ENCODE measurements at regions of chr11 and their contacts with region 1.

Region 1: DNA sequence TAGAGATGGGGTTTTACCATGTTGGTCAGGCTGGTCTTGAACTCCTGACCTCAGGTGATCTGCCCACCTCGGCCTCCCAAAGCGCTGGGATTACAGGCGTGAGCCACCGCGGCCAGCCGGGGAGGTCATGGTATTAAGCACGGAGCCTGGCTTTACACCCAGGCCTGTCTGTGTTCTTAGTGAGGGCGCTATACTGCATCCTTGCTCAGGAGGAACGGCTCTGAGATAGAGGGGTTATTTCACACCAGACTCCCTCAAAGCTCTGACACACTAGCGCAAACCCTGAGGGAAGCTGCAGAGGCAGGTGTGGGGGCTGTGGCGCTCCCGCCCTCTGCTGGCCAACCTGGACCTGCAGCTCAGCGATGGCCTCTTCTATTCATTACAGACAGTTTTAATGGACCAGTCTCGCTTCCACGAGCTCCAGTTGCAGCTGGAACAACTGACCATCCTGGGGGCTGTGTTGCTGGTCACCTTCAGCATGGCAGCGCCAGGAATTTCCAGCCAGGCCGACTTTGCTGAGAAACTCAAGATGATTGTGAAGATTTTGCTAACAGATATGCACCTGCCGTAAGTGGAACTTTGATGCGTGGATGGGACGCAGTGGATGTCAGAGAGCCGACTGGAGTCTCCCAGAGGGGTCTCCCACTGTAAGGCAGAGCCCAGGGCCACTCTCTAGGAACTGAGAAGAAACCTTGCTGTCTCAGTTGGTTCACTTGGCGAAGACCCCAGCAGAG is 26.2 kb downstream of the TCP11L1 start:
- DNase-seq: peak; percentile 82
- H3K4me3 Mint-ChIP-seq: no peak overlapping the region
- H3K27ac Mint-ChIP-seq: no peak overlapping the region
- H3K4me1 Mint-ChIP-seq: peaks cover 31% of the 10 kb centered on the region
- H3K27me3 Mint-ChIP-seq: no peaks in the 10 kb centered on the region

Region 2: DNA sequence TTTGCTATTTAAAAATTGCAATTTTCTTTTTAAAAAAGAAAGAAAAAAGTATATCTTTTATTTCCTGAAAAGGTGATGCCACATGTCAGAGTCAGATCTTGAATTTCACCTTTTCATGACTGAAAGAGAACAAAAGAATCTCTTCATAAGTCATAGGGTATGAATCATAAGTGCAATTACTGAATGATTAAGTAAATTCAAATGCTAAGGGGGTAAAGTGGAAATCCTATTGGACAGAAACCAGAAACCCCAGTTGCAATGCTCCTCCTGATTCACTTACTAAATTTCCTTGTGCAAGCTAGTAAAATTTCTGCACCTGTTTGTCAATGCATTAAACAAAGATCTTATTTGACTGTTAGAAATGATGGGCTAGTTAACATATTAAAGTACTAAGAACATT is 244.1 kb before region 1 on chr11:
- CTCF ChIA-PET with region 1: interaction called, 4 read pairs
- POLR2A ChIA-PET with region 1: no interaction called
- intact Hi-C with region 1: loop called (anchors 5 kb)
- DNase-seq: no peak
- H3K4me3 Mint-ChIP-seq: no peak overlapping the region
- H3K27ac Mint-ChIP-seq: no peak overlapping the region
- H3K4me1 Mint-ChIP-seq: peaks cover 20% of the 10 kb centered on the region
- H3K27me3 Mint-ChIP-seq: peaks cover 7% of the 10 kb centered on the region

Region 3: GRCh38 chr11:32960553-32961164 is 105.0 kb before region 1 on chr11:
- CTCF ChIA-PET with region 1: interaction called, 263 read pairs
- POLR2A ChIA-PET with region 1: interaction called, 3 read pairs
- intact Hi-C with region 1: loop called (anchors 1 kb)
- DNase-seq: no peak
- H3K4me3 Mint-ChIP-seq: no peak overlapping the region
- H3K27ac Mint-ChIP-seq: no peak overlapping the region
- H3K4me1 Mint-ChIP-seq: peaks cover 9% of the 10 kb centered on the region
- H3K27me3 Mint-ChIP-seq: no peaks in the 10 kb centered on the region

Region 4: GRCh38 chr11:33039274-33040032 is 26.2 kb before region 1 on chr11 and contains the start of gene TCP11L1:
- CTCF ChIA-PET with region 1: interaction called, 31 read pairs
- POLR2A ChIA-PET with region 1: interaction called, 18 read pairs
- intact Hi-C with region 1: loop called (anchors 1 kb)
- DNase-seq: peak; percentile 89
- H3K4me3 Mint-ChIP-seq: peak within 1 kb of the TSS; percentile 87
- H3K27ac Mint-ChIP-seq: peak within 1 kb of the TSS; percentile 92
- H3K4me1 Mint-ChIP-seq: peaks cover 37% of the 10 kb centered on the region
- H3K27me3 Mint-ChIP-seq: peaks cover 10% of the 10 kb centered on the region
- total RNA-seq, gene TCP11L1: 10.0 to 11.4 TPM

Region 5: GRCh38 chr11:33089776-33090175 is 24.2 kb after region 1 on chr11:
- CTCF ChIA-PET with region 1: interaction called, 13 read pairs
- POLR2A ChIA-PET with region 1: no interaction called
- intact Hi-C with region 1: no loop called
- DNase-seq: no peak
- H3K4me3 Mint-ChIP-seq: no peak overlapping the region
- H3K27ac Mint-ChIP-seq: no peak overlapping the region
- H3K4me1 Mint-ChIP-seq: no peaks in the 10 kb centered on the region
- H3K27me3 Mint-ChIP-seq: no peaks in the 10 kb centered on the region